ENCODE measurements at regions of chr6 and their contacts with region 1.

Region 1: DNA sequence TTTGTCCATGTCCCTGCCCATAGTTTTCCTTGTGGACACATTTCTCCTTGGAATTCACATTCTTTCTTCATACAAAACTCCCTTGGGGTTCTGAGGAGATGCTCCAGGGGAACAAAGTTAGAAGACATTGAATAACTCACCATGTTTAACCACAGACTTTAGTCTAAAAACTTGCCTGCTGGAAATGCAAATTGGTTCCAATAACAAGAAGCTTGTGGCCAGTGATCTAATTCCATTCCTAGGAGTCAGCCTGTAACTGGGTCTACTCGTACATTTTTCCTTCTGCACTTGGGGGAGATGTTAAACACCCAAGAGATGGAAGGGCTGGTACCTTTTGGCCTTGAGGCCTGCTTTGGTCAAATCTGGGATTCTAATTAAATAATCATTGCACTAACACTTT is 60.2 kb downstream of the SCML4 start:
- DNase-seq: no peak
- ATAC-seq: no peak
- H3K4me3 ChIP-seq: no peak overlapping the region
- H3K4me3 Mint-ChIP-seq: no peak overlapping the region
- H3K27ac ChIP-seq: no peak overlapping the region
- H3K27ac Mint-ChIP-seq: peak overlapping the region in 3 of 9 donors; percentile 17 to 53 (median 30)
- H3K4me1 ChIP-seq: no peaks in the 10 kb centered on the region
- H3K4me1 Mint-ChIP-seq: peaks cover 10 to 59% (median 29%) of the 10 kb centered on the region in 7 donors
- H3K27me3 ChIP-seq: no peaks in the 10 kb centered on the region
- H3K27me3 Mint-ChIP-seq: no peaks in the 10 kb centered on the region

Region 2: DNA sequence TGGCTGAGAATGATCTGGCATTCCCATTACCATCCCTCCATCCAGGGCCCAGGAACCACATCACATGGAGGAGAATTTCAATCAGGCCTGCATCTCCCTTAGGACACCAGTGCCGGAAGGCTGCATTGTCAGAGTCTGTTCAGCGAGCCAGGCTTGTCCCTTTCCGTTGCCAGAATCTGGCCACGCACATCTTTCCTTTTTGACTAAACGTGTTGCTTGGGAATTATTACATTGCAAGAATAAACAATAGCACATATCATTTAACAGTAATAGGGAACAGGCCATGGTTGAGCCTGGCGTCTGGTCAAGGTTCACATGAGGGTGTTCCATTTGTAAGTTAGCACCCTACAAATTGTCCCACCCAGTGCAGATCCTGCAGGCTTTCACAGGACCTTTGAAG is 231.2 kb before region 1 on chr6:
- CTCF ChIA-PET with region 1: no interaction called
- POLR2A ChIA-PET with region 1: no interaction called
- intact Hi-C with region 1: no loop called
- DNase-seq: no peak
- ATAC-seq: no peak
- H3K4me3 ChIP-seq: no peak overlapping the region
- H3K4me3 Mint-ChIP-seq: no peak overlapping the region
- H3K27ac ChIP-seq: no peak overlapping the region
- H3K27ac Mint-ChIP-seq: no peak overlapping the region
- H3K4me1 ChIP-seq: no peaks in the 10 kb centered on the region
- H3K4me1 Mint-ChIP-seq: no peaks in the 10 kb centered on the region
- H3K27me3 ChIP-seq: no peaks in the 10 kb centered on the region
- H3K27me3 Mint-ChIP-seq: peaks cover 0 to 29% (median 5%) of the 10 kb centered on the region in 5 donors

Region 3: DNA sequence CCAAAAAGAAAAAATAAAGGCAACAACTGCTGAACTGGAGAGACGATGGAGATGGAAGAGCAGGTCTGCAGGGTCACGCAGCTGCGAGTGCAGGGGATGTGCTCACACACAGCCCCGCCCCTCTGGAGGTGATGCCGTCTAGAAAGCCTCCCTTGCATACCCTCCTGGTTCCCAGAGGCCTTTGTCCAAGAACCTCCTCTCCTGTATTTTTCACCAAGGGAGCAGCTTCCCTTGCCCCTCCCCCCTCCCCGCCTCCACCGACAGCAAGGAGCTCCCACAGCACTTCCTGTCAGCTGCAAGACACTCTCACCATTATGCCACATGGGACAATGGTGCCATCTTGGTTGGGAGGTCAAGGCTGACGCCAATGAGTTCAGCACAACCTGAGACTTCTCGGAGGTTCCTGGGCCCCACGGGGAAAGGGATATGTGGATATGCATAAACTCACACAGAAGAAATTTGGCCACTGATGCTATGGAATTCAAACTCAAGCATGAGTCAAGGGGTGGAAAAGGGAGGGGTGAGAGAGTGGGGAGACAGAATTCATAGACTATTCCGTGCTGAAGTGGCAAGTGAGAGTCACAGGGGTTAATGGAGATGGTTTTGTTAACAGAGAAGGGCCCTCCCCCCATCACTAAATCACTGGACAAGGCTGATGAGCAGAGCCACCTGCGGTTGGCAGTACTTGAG is 72.7 kb before region 1 on chr6:
- CTCF ChIA-PET with region 1: no interaction called
- POLR2A ChIA-PET with region 1: no interaction called
- intact Hi-C with region 1: no loop called
- DNase-seq: no peak
- ATAC-seq: no peak
- H3K4me3 ChIP-seq: no peak overlapping the region
- H3K4me3 Mint-ChIP-seq: peak overlapping the region in 1 of 10 donors; percentile 8
- H3K27ac ChIP-seq: no peak overlapping the region
- H3K27ac Mint-ChIP-seq: no peak overlapping the region
- H3K4me1 ChIP-seq: no peaks in the 10 kb centered on the region
- H3K4me1 Mint-ChIP-seq: peaks cover 0 to 8% (median 6%) of the 10 kb centered on the region in 7 donors
- H3K27me3 ChIP-seq: no peaks in the 10 kb centered on the region
- H3K27me3 Mint-ChIP-seq: peaks cover 0 to under 1% (median 0%) of the 10 kb centered on the region in 5 donors

Region 4: GRCh38 chr6:107793191-107793590 is 29.2 kb after region 1 on chr6:
- CTCF ChIA-PET with region 1: no interaction called
- POLR2A ChIA-PET with region 1: interaction called, 4 read pairs
- intact Hi-C with region 1: loop called in 1 of 2 experiments (anchors 1 kb)
- DNase-seq: peak in 6 of 9 donors; percentile 21 to 51 (median 39)
- ATAC-seq: peak; percentile 51
- H3K4me3 ChIP-seq: no peak overlapping the region
- H3K4me3 Mint-ChIP-seq: peak overlapping the region in 9 of 10 donors; percentile 19 to 80 (median 55)
- H3K27ac ChIP-seq: peak overlapping the region; percentile 66
- H3K27ac Mint-ChIP-seq: peak overlapping the region in 8 of 9 donors; percentile 52 to 97 (median 92)
- H3K4me1 ChIP-seq: peaks cover 19 to 54% of the 10 kb centered on the region in 2 donors
- H3K4me1 Mint-ChIP-seq: peaks cover 37 to 96% (median 93%) of the 10 kb centered on the region in 7 donors
- H3K27me3 ChIP-seq: no peaks in the 10 kb centered on the region
- H3K27me3 Mint-ChIP-seq: peaks cover 0 to 7% (median 0%) of the 10 kb centered on the region in 5 donors